ENCODE measurements at regions of chr2 and their contacts with region 1.

Region 1: GRCh38 chr2:96208143-96209010 is at the start of gene STARD7:
- DNase-seq: peak; percentile 94 to 96 (median 94)
- H3K4me3 ChIP-seq: peak within 1 kb of the TSS; percentile 96
- H3K4me3 Mint-ChIP-seq: peak within 1 kb of the TSS; percentile 90 to 97 (median 92)
- H3K27ac ChIP-seq: peak within 1 kb of the TSS; percentile 82
- H3K27ac Mint-ChIP-seq: peak within 1 kb of the TSS; percentile 87 to 97 (median 93)
- H3K4me1 ChIP-seq: peaks cover 57% of the 10 kb centered on the region
- H3K4me1 Mint-ChIP-seq: peaks cover 51 to 55% (median 54%) of the 10 kb centered on the region in 3 donors
- H3K27me3 ChIP-seq: no peaks in the 10 kb centered on the region
- H3K27me3 Mint-ChIP-seq: no peaks in the 10 kb centered on the region
- total RNA-seq, gene STARD7: 255 to 256 TPM

Region 2: GRCh38 chr2:96116879-96117697 is 91.3 kb before region 1 on chr2:
- CTCF ChIA-PET with region 1: no interaction called
- POLR2A ChIA-PET with region 1: interaction called, 15 read pairs
- DNase-seq: peak; percentile 48 to 72 (median 63)
- H3K4me3 ChIP-seq: peak overlapping the region; percentile 29
- H3K4me3 Mint-ChIP-seq: peak overlapping the region; percentile 47 to 87 (median 75)
- H3K27ac ChIP-seq: no peak overlapping the region
- H3K27ac Mint-ChIP-seq: peak overlapping the region in 4 of 8 donors; percentile 27 to 47 (median 30)
- H3K4me1 ChIP-seq: peaks cover 7% of the 10 kb centered on the region
- H3K4me1 Mint-ChIP-seq: peaks cover 9 to 35% (median 11%) of the 10 kb centered on the region in 3 donors
- H3K27me3 ChIP-seq: no peaks in the 10 kb centered on the region
- H3K27me3 Mint-ChIP-seq: peaks cover 19% of the 10 kb centered on the region in 2 donors

Region 3: GRCh38 chr2:96186562-96186961 is 21.8 kb before region 1 on chr2:
- CTCF ChIA-PET with region 1: no interaction called
- POLR2A ChIA-PET with region 1: no interaction called
- DNase-seq: no peak
- H3K4me3 ChIP-seq: no peak overlapping the region
- H3K4me3 Mint-ChIP-seq: no peak overlapping the region
- H3K27ac ChIP-seq: no peak overlapping the region
- H3K27ac Mint-ChIP-seq: no peak overlapping the region
- H3K4me1 ChIP-seq: no peaks in the 10 kb centered on the region
- H3K4me1 Mint-ChIP-seq: peaks cover 0 to 7% (median 4%) of the 10 kb centered on the region in 3 donors
- H3K27me3 ChIP-seq: no peaks in the 10 kb centered on the region
- H3K27me3 Mint-ChIP-seq: no peaks in the 10 kb centered on the region

Region 4: DNA sequence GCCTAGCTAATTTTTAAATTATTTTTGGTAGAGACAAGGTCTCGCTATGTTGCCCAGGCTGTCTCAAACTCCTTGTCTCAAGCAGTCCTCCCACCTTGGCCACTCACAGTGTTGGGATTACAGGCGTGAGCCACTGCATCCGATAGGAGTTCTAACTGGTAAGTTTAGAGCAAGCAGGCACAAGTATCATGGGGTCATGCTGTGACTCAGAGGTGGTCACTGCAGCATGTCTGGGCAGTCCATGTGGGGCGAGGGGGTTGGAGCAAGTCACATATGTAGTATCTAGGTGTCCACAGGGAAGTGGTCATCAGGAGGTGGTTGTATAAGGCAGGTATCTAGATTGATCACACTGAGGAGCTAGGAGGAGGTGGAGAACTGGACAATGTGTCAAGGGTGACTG is 22.9 kb after region 1 on chr2:
- CTCF ChIA-PET with region 1: no interaction called
- POLR2A ChIA-PET with region 1: no interaction called
- DNase-seq: no peak
- H3K4me3 ChIP-seq: no peak overlapping the region
- H3K4me3 Mint-ChIP-seq: no peak overlapping the region
- H3K27ac ChIP-seq: no peak overlapping the region
- H3K27ac Mint-ChIP-seq: no peak overlapping the region
- H3K4me1 ChIP-seq: no peaks in the 10 kb centered on the region
- H3K4me1 Mint-ChIP-seq: no peaks in the 10 kb centered on the region
- H3K27me3 ChIP-seq: no peaks in the 10 kb centered on the region
- H3K27me3 Mint-ChIP-seq: no peaks in the 10 kb centered on the region

Region 5: DNA sequence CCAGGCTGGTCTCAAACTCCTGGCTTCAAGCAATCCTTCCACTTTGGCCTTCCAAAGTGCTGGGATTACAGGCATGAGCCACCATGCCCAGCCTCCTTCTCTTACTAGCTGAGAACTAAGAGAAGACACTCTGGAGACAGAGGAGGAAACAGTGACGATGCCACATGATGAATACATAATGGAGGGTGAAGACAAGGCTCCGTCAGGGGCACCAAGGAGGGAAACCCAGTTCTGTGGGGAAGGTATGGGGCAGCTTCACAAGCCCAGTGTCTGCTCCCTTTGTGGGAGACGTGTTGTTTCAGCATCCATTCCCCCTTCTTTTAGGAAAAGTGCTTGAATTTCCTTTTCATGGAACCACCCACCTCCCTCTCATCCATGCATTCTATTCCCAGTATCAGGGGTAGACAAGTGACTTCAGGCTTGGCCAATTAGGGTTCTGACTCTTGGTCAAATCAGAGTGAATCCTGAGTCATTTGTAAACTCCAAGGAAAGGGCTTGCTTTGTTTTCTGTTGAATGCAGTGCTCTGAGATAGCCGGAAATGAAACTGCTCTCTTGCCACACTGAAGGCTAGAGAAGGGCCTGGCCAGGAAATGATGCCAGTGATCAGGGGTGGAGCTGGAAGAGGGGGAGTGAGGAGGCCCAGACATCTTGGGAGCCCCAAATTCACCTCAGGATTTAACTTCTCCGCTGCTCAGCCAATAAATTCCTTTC is 33.7 kb after region 1 on chr2:
- CTCF ChIA-PET with region 1: interaction called, 5 read pairs
- POLR2A ChIA-PET with region 1: interaction called, 15 read pairs
- DNase-seq: peak; percentile 27 to 69 (median 40)
- H3K4me3 ChIP-seq: peak overlapping the region; percentile 30
- H3K4me3 Mint-ChIP-seq: peak overlapping the region; percentile 32 to 88 (median 76)
- H3K27ac ChIP-seq: peak overlapping the region; percentile 71
- H3K27ac Mint-ChIP-seq: peak overlapping the region; percentile 91 to 99 (median 96)
- H3K4me1 ChIP-seq: peaks cover 40% of the 10 kb centered on the region
- H3K4me1 Mint-ChIP-seq: peaks cover 33 to 52% (median 41%) of the 10 kb centered on the region in 3 donors
- H3K27me3 ChIP-seq: no peaks in the 10 kb centered on the region
- H3K27me3 Mint-ChIP-seq: no peaks in the 10 kb centered on the region

Region 6: GRCh38 chr2:96747136-96747535 is 538.8 kb after region 1 on chr2:
- CTCF ChIA-PET with region 1: no interaction called
- POLR2A ChIA-PET with region 1: no interaction called
- DNase-seq: no peak
- H3K4me3 ChIP-seq: no peak overlapping the region
- H3K4me3 Mint-ChIP-seq: no peak overlapping the region
- H3K27ac ChIP-seq: no peak overlapping the region
- H3K27ac Mint-ChIP-seq: no peak overlapping the region
- H3K4me1 ChIP-seq: no peaks in the 10 kb centered on the region
- H3K4me1 Mint-ChIP-seq: peaks cover 0 to 2% (median 2%) of the 10 kb centered on the region in 3 donors
- H3K27me3 ChIP-seq: no peaks in the 10 kb centered on the region
- H3K27me3 Mint-ChIP-seq: peaks cover 2 to 4% of the 10 kb centered on the region in 2 donors

Measured in CD8-positive, alpha-beta memory T cell (primary cell).